GM10248 (cell line): ENCODE measurements at regions of chr14 and their contacts with region 1.

Region 1: GRCh38 chr14:75088574-75089373 is 19.3 kb downstream of the ZC2HC1C start:
- DNase-seq: peak; percentile 49
- CTCF ChIP-seq: peak; percentile 56

Region 2: DNA sequence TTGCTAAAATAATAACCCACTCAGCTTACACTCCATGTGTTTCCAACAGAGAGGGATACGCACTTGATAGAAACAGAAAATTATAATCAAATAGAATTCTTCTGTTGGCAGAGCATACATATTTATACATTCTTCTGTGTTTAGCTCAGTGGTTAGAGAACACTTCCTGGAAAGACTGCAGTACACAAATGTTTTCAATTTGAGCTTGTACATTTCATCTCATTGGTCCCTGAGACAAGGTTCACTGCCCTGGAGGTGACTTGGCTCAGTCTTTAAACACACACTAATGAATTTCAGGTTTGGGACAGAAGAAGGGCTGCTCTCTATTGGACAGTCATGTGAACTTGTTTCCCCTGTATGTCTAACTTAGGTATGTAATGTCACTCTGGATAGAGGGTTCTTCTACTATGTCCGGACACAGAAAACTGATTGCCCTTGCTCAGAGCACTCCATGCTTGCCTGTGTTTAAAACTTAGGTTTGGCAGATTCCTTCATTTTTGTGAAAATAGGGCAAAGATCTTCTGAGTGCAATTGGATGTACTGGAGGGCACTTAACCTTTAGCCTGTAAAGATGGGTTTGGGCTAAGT is 235.8 kb before region 1 on chr14:
- CTCF ChIA-PET with region 1: interaction called, 72 read pairs
- POLR2A ChIA-PET with region 1: no interaction called
- DNase-seq: no peak
- CTCF ChIP-seq: no peak

Region 3: DNA sequence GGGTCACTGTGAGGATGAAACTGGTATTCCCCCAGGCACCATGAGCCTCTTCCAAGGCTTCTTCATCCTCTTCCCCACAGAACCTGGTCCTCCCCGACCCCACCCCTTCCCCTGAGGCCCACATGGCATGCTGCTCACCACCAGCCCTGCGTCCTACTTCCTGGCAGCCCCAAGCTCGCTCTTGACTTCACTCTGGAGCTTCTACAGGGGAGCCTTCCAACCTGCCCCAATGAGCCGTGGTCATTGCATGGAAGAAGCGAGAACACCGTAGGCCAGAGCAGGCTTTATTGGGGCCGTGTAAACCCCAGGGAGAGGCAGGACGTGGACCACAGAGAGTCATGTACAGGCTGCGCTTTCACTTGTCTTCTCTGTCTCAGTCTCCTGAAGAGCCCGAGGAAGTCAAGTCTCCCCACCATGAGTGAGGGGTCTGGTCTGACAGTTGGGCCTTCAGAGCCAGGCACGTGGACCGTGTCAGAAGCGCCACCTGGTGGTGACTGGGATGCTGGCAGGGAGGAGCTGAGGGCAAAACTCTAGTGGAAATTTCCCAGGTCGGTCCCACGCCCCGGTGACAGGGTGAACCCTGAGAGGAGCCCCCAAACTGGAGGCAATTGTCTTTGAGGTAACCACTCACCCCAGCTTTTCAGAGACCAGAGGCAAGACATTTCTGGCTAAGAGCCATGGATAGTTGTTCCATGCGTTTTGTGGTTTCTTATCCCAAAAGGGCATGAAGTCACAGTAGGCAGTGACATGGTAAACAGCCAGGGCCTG is 183.2 kb before region 1 on chr14:
- CTCF ChIA-PET with region 1: interaction called, 37 read pairs
- POLR2A ChIA-PET with region 1: no interaction called
- DNase-seq: peak; percentile 82
- CTCF ChIP-seq: peak; percentile 88

Region 4: DNA sequence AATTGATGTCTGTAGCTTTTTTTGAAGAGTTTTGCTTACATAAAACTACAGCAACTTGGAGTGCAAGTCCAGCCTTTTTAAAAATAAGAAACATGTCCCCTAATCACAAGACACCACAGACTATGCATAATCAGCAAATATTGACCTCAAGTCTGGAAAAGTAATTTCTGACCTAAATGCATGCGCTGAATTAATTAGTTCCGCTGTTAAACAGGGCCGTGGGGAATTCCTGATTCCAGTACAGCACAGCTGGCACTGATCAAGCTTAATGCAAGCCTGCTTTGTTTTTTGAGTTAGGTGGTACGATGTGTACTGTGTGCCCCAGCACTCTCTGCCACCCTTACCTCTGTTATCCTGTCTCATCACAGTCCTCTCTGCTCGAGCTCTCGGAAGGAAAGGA is 46.7 kb before region 1 on chr14:
- CTCF ChIA-PET with region 1: no interaction called
- POLR2A ChIA-PET with region 1: no interaction called
- DNase-seq: no peak
- CTCF ChIP-seq: no peak

Region 5: DNA sequence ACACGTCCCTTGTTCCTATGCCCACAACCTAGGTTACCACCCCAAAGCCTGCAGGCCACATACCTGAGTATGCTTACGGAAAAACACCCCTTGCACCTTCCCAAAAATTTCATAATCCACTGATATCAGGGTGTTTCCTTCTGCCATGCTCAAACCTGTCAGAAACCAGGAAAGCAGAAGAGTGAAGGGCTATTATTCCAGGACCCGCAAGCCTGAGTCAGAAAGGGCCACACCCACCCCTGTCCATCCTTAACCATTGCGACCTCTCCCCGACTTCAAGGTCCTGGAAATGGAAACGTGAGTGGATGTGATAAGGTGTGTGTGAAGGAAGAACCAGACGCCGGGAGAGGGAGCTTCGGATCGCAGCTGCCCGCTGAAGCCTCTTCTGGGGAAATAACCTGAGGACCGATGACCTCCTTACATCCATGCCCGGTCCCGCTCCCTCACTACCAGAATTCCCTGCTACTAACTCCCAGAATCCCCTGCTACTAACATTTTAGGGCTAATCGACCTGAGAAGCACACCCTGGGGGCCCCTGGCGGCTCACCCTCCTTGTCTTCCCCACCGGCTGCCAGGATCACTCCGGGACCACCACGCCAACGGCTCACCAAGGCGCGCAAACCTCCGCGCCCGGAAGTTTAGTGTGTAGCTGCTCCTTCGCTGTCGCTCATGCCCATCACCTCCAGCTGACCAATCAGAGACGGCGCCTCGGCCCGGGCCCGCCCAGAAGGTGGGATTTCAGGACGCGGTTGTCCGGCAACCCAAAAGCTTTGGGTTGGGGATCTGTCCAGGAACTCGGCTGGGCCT is 25.2 kb before region 1 on chr14 and contains the start of gene ACYP1:
- CTCF ChIA-PET with region 1: interaction called, 27 read pairs
- POLR2A ChIA-PET with region 1: no interaction called
- DNase-seq: peak; percentile 96
- CTCF ChIP-seq: no peak

Region 6: GRCh38 chr14:75077794-75078193 is 11.0 kb before region 1 on chr14:
- CTCF ChIA-PET with region 1: interaction called, 23 read pairs
- POLR2A ChIA-PET with region 1: no interaction called
- DNase-seq: no peak
- CTCF ChIP-seq: no peak